A673 (cell line): ENCODE measurements at regions of chr2 and their contacts with region 1.

Region 1: DNA sequence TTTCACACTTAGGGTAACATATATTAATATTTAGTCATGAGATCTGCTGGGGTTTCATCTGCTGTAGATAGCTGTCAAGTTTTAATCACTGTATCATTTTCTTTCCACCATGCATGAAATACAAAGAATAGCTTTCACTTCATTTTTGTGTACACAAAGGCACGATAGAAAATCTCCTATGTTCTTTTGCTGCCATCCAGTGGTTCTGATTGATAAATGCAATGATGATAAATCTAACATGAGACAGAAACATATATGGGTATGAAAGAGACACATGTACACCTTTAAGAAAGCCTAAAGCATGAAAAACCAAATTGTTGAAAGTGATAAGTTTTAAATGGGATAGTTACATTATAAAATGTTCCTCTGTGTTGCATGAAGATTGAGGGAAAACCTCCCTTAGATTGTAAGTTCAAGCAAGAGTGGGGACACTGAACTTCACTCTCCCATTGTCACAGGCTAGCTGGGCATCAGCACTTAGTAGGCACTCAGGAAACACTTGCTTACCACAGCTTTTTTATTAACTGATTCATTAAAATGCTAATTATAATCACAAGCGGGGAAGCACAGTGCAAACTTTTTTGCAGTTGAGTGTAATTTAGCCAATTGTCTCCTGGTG is 31.2 kb downstream of the C1D start:
- DNase-seq: peak; percentile 81
- H3K4me3 ChIP-seq: no peak overlapping the region
- H3K27ac ChIP-seq: peak overlapping the region; percentile 20
- H3K4me1 ChIP-seq: peaks cover 11% of the 10 kb centered on the region
- H3K27me3 ChIP-seq: no peaks in the 10 kb centered on the region
- CTCF ChIP-seq: peak; percentile 72

Region 2: GRCh38 chr2:67240507-67240906 is 791.1 kb before region 1 on chr2:
- CTCF ChIA-PET with region 1: no interaction called
- POLR2A ChIA-PET with region 1: no interaction called
- intact Hi-C with region 1: loop called (anchors 10 kb)
- DNase-seq: peak; percentile 49
- H3K4me3 ChIP-seq: no peak overlapping the region
- H3K27ac ChIP-seq: no peak overlapping the region
- H3K4me1 ChIP-seq: peaks cover 29% of the 10 kb centered on the region
- H3K27me3 ChIP-seq: no peaks in the 10 kb centered on the region
- CTCF ChIP-seq: no peak

Region 3: DNA sequence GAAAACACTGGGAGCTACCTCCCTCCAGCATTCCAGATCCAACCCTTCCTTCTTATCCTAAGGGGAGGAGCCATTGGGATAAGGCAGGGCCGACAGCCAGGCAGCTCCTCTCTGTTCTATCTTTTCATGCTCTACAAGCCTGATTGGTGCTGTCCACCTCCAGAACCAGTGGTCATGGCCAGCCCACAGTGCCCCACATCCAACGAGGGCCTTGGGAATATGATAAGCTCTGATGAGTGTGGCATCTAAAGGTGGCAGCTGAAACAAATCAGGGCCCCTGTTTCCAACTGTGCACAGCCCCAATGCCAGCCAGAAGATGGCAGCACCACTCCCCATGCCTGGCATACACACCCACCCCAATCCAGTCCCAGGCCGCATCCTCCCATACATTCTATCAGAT is 298.1 kb before region 1 on chr2:
- CTCF ChIA-PET with region 1: interaction called, 5 read pairs
- POLR2A ChIA-PET with region 1: no interaction called
- intact Hi-C with region 1: loop called (anchors 2 kb)
- DNase-seq: peak; percentile 73
- H3K4me3 ChIP-seq: no peak overlapping the region
- H3K27ac ChIP-seq: no peak overlapping the region
- H3K4me1 ChIP-seq: no peaks in the 10 kb centered on the region
- H3K27me3 ChIP-seq: no peaks in the 10 kb centered on the region
- CTCF ChIP-seq: peak; percentile 75

Region 4: DNA sequence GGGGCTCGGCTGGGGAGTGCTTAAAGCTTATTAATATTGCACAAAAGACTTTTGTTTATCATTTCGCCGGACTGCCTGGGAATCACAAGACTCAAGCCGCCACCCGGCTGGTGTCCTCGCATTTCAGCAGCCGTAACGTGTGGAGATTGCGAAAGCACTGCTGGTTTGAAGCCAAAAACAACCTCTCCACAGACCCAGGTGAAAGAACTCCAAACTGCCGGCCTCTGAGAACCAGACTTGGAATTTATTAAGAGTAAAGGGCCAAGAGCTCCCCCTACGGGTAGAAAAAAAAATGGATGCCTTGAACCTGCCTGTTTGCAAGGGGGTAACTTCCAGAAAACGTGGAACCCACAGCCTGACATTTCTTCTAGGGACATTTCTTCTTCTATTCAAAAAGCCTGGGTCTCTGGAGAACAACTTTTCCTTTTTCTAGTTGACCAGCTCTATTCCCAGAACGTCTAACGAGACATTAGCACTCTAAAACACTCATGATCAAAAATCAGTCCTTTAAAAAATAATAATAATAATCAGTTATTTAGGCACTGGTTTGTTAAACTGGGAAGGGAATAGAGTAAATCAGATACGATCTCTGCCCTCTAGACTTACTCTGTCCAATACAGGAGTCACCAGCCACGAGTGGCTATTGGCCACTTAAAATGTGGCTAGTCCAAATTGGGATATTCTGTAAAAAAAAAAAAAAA is 185.1 kb before region 1 on chr2:
- CTCF ChIA-PET with region 1: interaction called, 6 read pairs
- POLR2A ChIA-PET with region 1: no interaction called
- intact Hi-C with region 1: loop called (anchors 2 kb)
- DNase-seq: peak; percentile 90
- H3K4me3 ChIP-seq: peak overlapping the region; percentile 24
- H3K27ac ChIP-seq: no peak overlapping the region
- H3K4me1 ChIP-seq: peaks cover 14% of the 10 kb centered on the region
- H3K27me3 ChIP-seq: no peaks in the 10 kb centered on the region
- CTCF ChIP-seq: peak; percentile 84